ENCODE measurements at regions of chr3 and their contacts with region 1.

Region 1: GRCh38 chr3:119902061-119902460 is 120.2 kb downstream of the NR1I2 start:
- DNase-seq: no peak
- ATAC-seq: no peak
- H3K4me3 ChIP-seq: no peak overlapping the region
- H3K27ac ChIP-seq: no peak overlapping the region
- H3K4me1 ChIP-seq: no peaks in the 10 kb centered on the region
- H3K27me3 ChIP-seq: no peaks in the 10 kb centered on the region

Region 2: DNA sequence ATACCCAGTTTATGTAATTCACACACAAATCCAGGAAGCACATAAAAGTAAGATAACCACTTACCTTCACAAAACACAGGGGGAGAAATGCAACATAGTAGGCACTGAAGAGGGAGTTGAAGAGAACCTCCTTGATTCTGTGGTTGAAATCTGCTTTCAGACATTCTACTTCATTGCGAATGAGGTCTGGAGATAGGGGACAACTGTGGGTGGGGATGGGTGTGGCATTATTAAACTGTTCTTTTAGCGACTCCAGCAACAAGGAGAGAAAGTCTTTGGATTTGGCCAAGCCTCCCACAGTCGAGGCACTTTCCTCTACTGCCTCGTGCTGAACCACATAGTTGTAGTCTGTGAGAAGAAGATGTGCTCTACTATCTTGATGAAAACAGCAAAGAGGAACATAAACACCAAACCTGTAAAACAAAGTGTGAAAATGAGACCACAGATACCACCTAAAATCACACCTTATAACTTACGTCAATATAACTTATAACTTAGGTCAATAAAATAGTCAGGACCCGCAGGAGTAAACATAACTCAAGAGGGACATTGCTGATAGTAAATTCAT is 464.3 kb before region 1 on chr3:
- intact Hi-C with region 1: no loop called
- DNase-seq: no peak
- ATAC-seq: no peak
- H3K4me3 ChIP-seq: no peak overlapping the region
- H3K27ac ChIP-seq: no peak overlapping the region
- H3K4me1 ChIP-seq: peaks cover 3% of the 10 kb centered on the region
- H3K27me3 ChIP-seq: no peaks in the 10 kb centered on the region

Region 3: DNA sequence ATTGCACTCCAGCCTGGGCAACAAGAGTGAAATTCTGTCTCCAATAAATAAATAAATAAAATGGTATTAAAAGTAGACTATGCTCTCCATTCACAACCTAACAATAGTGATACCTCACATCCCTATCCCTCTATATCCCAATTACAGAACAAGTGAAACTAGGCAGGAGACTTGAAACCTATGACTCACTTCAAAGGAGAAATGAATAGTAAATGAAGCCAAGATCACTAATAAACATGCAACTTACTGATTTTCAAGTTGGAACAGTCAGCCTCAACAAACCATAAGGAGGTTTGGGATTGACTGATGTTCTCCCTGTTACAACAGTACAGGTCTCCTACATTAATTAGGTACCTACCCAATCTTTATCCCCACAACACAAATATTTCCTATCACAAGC is 88.8 kb after region 1 on chr3:
- intact Hi-C with region 1: loop called in 1 of 4 experiments (anchors 10 kb)
- DNase-seq: no peak
- ATAC-seq: no peak
- H3K4me3 ChIP-seq: no peak overlapping the region
- H3K27ac ChIP-seq: no peak overlapping the region
- H3K4me1 ChIP-seq: no peaks in the 10 kb centered on the region
- H3K27me3 ChIP-seq: no peaks in the 10 kb centered on the region

Region 4: DNA sequence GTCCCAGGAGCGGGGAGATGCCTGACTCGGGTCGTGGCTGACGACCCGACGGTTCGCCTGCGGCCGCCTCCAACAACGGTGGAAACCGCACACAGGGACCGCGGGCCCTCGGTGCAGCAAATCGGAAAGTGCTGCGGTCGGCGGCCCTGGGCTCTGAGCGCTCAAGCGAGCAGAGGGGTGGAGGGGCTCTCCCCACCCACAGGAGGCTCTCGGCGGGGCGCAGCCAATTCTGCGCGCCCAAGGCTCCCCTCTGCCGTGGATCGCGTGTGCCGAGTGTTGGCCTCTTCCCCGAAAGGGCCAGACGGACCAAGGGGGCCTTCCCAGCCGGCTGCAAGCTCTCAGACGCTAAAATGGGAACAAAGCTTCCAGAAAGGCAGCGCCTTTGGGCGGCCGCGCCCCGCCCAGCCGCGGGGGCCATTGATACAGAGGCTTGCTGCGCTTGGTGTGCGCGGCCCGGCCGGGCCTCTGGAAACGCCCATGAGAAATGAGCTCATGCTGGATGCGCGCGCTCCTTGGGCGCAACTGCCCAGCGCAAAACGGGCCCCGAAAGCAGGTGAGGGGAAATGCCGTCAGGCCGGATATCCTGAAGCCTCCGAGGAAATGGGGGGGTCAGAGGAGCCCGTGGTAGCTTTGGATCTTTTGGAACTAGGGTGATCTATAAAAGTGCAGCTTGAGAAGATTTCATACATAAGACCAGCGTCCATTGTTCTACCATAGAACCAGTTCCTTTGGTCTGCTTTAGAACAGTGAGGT is 193.3 kb after region 1 on chr3:
- intact Hi-C with region 1: loop called in 3 of 4 experiments (anchors 10 kb)
- DNase-seq: peak; percentile 93 to 96 (median 95)
- ATAC-seq: peak; percentile 75 to 81
- H3K4me3 ChIP-seq: peak overlapping the region; percentile 74
- H3K27ac ChIP-seq: peak overlapping the region; percentile 98
- H3K4me1 ChIP-seq: no peaks in the 10 kb centered on the region
- H3K27me3 ChIP-seq: no peaks in the 10 kb centered on the region

Measured in right cardiac atrium (tissue), 5 donors.